MCF 10A (cell line): ENCODE measurements at regions of chr12 and their contacts with region 1.

Region 1: GRCh38 chr12:10721651-10722501 is 1.2 kb downstream of the YBX3 start:
- DNase-seq: peak; percentile 99
- H3K4me3 Mint-ChIP-seq: peak overlapping the region; percentile 99
- H3K27ac Mint-ChIP-seq: peak overlapping the region; percentile 98
- H3K4me1 Mint-ChIP-seq: peaks cover 39% of the 10 kb centered on the region
- H3K27me3 Mint-ChIP-seq: no peaks in the 10 kb centered on the region
- CTCF ChIP-seq: no peak

Region 2: DNA sequence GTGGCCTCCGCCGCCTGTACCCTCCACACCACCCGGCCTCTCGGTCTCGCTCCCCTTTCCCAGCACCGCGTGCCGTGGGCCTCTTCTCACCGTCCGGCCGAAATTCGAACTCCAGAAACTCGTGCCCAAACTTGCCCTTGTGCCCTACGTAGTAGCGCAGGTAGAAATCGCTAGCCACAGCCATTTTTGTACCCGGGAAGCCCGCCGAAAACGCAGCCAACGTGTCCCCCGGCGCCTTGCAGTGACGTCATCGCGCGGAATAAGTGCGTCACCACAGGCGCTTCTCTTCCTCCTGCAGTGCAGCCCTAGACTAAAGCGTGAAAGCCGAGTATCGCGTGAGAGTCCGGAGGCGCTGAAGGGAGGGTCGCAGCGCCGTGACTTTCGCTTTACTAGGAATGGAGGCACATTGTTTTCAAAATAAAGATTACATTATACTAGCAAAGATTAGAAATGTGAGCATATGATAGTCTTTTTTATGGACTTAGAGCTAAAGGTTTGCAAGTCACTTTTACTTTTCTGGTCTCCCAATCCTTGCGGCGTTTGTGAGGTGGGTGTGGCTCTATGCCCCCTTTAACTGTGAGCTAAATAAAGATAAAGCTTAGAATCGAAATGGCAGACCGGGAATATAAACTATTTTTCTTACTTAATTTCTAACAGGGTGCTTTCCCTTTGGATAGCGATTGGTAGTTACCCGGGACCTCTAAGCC is 108.4 kb before region 1 on chr12 and contains the start of gene MAGOHB:
- CTCF ChIA-PET with region 1: no interaction called
- POLR2A ChIA-PET with region 1: interaction called, 27 read pairs
- intact Hi-C with region 1: no loop called
- DNase-seq: peak; percentile 95
- H3K4me3 Mint-ChIP-seq: peak within 1 kb of the TSS; percentile 99
- H3K27ac Mint-ChIP-seq: peak within 1 kb of the TSS; percentile 100
- H3K4me1 Mint-ChIP-seq: peaks cover 26% of the 10 kb centered on the region
- H3K27me3 Mint-ChIP-seq: no peaks in the 10 kb centered on the region
- CTCF ChIP-seq: no peak
- total RNA-seq, gene MAGOHB: 36.8 and 44.5 TPM in 2 replicates

Region 3: DNA sequence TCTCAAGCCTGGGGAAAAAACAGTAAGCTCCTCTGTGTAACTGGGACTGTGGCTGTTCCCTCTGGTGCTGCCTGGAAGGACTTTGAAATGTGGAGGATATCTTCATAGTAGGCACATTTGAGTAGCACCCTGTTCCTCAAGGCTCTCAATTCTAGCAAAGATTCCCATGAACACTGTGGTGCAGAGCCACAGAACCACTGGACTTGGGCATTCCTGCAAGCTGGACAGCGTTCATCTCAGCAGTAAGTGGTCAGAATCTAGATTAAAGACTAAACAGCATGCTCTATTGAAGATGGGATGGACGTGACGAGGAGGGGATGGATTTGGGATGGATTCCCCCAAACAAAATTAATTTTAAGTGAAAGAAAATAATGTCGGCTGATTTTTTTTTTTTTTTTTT is 10.7 kb after region 1 on chr12:
- CTCF ChIA-PET with region 1: interaction called, 3 read pairs
- POLR2A ChIA-PET with region 1: interaction called, 21 read pairs
- intact Hi-C with region 1: no loop called
- DNase-seq: no peak
- H3K4me3 Mint-ChIP-seq: no peak overlapping the region
- H3K27ac Mint-ChIP-seq: no peak overlapping the region
- H3K4me1 Mint-ChIP-seq: no peaks in the 10 kb centered on the region
- H3K27me3 Mint-ChIP-seq: no peaks in the 10 kb centered on the region
- CTCF ChIP-seq: no peak

Region 4: DNA sequence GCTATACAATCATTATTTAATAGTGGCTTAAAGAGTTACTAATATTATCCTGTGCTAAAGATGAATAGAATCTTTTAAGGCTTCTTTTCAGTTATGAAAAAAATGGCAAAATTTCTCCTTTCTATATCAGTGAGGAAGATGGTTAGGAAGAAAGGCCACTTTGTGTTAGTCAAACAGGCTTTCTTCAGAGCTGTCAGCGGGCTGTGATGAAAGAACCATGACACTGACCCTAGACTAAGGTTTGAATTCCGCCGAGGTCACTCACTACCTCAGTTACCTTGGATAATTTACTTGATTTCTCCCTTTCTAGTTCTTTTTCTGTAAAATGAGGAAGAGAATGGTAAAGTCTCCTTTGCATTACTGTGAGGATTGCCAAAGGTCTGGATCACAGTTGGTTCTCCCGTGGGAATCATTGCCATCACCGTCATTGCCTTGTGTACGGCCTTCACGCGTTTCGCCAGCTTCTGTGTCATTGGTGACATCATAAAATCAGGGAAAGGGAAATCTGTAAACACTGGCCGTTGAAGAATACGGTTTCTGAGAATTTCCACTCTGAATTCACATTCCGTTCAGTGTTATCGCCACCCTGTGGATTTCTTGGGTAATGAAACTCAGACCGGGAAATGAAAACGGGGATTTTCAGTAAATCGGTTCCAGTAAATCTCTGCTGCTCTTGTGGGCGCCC is 28.0 kb after region 1 on chr12:
- CTCF ChIA-PET with region 1: interaction called, 42 read pairs
- POLR2A ChIA-PET with region 1: interaction called, 192 read pairs
- intact Hi-C with region 1: loop called (anchors 1 kb)
- DNase-seq: peak; percentile 94
- H3K4me3 Mint-ChIP-seq: peak overlapping the region; percentile 66
- H3K27ac Mint-ChIP-seq: peak overlapping the region; percentile 79
- H3K4me1 Mint-ChIP-seq: peaks cover 6% of the 10 kb centered on the region
- H3K27me3 Mint-ChIP-seq: peaks cover 22% of the 10 kb centered on the region
- CTCF ChIP-seq: peak; percentile 82

Region 5: GRCh38 chr12:11486623-11487444 is 765.0 kb after region 1 on chr12:
- CTCF ChIA-PET with region 1: no interaction called
- POLR2A ChIA-PET with region 1: no interaction called
- intact Hi-C with region 1: loop called (anchors 1 kb)
- DNase-seq: peak; percentile 88
- H3K4me3 Mint-ChIP-seq: no peak overlapping the region
- H3K27ac Mint-ChIP-seq: no peak overlapping the region
- H3K4me1 Mint-ChIP-seq: peaks cover 9% of the 10 kb centered on the region
- H3K27me3 Mint-ChIP-seq: peaks cover 47% of the 10 kb centered on the region
- CTCF ChIP-seq: peak; percentile 97